H1 (cell line): ENCODE measurements at regions of chr17 and their contacts with region 1.

Region 1: GRCh38 chr17:61635913-61636432 is 45.0 kb upstream of the NACA2 start:
- DNase-seq: peak in 1 of 2 experiments; percentile 66
- H3K4me3 ChIP-seq: no peak overlapping the region
- H3K27ac ChIP-seq: no peak overlapping the region
- H3K4me1 ChIP-seq: no peaks in the 10 kb centered on the region
- H3K27me3 ChIP-seq: no peaks in the 10 kb centered on the region
- CTCF ChIP-seq: peak in 2 of 3 experiments; percentile 66 to 83; a peak in 3 of 4 replicates
- EP300 ChIP-seq: no peak
- POLR2A ChIP-seq: no peak
- RAD21 ChIP-seq: peak; percentile 95 to 97

Region 2: DNA sequence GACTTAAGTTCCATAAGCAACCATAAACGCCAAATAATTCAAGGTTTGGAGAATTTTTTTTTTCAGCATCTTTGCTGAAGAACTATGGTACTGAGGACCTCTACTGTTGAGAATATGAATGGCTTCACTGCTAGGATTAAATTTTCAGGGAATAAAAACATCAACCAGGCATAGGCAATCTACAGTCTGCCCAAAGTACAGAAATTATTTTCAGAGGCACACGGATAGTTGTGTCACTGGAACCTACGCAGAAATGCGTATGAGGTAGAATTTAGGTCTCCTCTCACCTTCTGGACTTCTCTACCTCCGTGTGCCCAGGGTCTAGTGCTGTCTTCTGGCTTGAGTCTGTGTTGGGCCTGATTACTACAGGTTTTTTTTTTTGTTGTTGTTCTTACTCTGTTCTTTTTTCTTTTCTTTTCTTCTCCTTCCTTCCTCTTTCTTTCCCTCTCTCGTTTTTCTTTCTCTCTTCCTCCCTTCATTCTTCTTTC is 84.7 kb before region 1 on chr17:
- CTCF ChIA-PET with region 1: no interaction called
- POLR2A ChIA-PET with region 1: no interaction called
- DNase-seq: no peak
- H3K4me3 ChIP-seq: no peak overlapping the region
- H3K27ac ChIP-seq: no peak overlapping the region
- H3K4me1 ChIP-seq: no peaks in the 10 kb centered on the region
- H3K27me3 ChIP-seq: no peaks in the 10 kb centered on the region; a peak in 2 of 7 replicates
- CTCF ChIP-seq: peak in 2 of 3 experiments; percentile 40 to 62; a peak in 2 of 4 replicates
- EP300 ChIP-seq: no peak
- POLR2A ChIP-seq: no peak
- RAD21 ChIP-seq: peak; percentile 73 to 75

Region 3: GRCh38 chr17:61837175-61838051 is 201.4 kb after region 1 on chr17:
- CTCF ChIA-PET with region 1: interaction called, 18 read pairs
- POLR2A ChIA-PET with region 1: interaction called, 3 read pairs
- DNase-seq: no peak
- H3K4me3 ChIP-seq: no peak overlapping the region
- H3K27ac ChIP-seq: no peak overlapping the region
- H3K4me1 ChIP-seq: no peaks in the 10 kb centered on the region
- H3K27me3 ChIP-seq: no peaks in the 10 kb centered on the region; a peak in 1 of 7 replicates
- CTCF ChIP-seq: peak; percentile 46 to 64 (median 63)
- EP300 ChIP-seq: no peak
- POLR2A ChIP-seq: no peak
- RAD21 ChIP-seq: peak; percentile 80 to 81